ENCODE measurements at regions of chr1 and their contacts with region 1.

Region 1: GRCh38 chr1:63367215-63368103 is at the start of gene ALG6:
- DNase-seq: peak; percentile 98
- ATAC-seq: peak; percentile 100
- total RNA-seq, gene ALG6: 4.0 TPM

Region 2: DNA sequence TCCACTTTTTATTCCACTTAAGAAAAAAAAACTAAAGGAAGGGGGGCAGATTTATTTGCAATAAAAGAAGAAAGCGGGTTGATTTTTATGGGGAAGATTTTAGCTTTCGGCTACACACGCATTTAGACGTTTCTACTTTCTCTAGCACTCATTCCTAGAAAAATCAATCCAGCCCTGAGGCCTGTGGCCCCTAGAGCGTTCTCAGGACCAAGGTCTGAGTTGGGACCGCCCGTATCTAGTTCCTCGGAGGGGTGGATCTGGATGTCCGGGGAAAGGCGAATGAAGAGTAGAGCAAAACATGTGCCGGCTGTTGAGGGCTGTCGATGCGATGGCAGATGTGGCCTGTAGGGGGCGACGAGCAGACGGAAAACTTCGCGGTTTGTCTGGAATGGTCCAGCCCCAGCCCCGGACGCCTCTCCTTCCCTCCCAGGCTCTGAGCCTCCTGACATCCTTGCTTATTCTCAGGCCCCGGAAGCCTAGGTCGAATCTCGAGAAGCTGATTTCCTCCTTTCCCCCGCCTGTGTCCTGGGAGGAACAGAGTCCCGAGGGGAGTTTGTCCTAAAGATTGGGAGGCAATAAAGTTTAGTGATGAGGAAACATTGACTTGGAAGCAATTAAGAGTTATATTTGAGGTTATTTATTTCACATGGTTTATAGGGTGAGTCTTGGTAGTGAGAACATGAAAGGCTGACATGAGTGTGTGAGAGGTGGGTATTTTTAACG is 39.9 kb before region 1 on chr1:
- intact Hi-C with region 1: loop called (anchors 5 kb)
- DNase-seq: peak; percentile 53
- ATAC-seq: peak; percentile 62